MCF 10A (cell line): ENCODE measurements at regions of chr20 and their contacts with region 1.

Region 1: GRCh38 chr20:59042796-59043660 is 442 bp upstream of the PRELID3B start:
- DNase-seq: peak; percentile 93
- H3K4me3 Mint-ChIP-seq: peak overlapping the region; percentile 86
- H3K27ac Mint-ChIP-seq: peak overlapping the region; percentile 90
- H3K4me1 Mint-ChIP-seq: peaks cover 39% of the 10 kb centered on the region
- H3K27me3 Mint-ChIP-seq: no peaks in the 10 kb centered on the region
- CTCF ChIP-seq: no peak

Region 2: GRCh38 chr20:59010995-59011873 is 31.8 kb before region 1 on chr20:
- CTCF ChIA-PET with region 1: no interaction called
- POLR2A ChIA-PET with region 1: interaction called, 10 read pairs
- intact Hi-C with region 1: no loop called
- DNase-seq: peak; percentile 59
- H3K4me3 Mint-ChIP-seq: no peak overlapping the region
- H3K27ac Mint-ChIP-seq: peak overlapping the region; percentile 58
- H3K4me1 Mint-ChIP-seq: peaks cover 24% of the 10 kb centered on the region
- H3K27me3 Mint-ChIP-seq: no peaks in the 10 kb centered on the region
- CTCF ChIP-seq: no peak

Region 3: DNA sequence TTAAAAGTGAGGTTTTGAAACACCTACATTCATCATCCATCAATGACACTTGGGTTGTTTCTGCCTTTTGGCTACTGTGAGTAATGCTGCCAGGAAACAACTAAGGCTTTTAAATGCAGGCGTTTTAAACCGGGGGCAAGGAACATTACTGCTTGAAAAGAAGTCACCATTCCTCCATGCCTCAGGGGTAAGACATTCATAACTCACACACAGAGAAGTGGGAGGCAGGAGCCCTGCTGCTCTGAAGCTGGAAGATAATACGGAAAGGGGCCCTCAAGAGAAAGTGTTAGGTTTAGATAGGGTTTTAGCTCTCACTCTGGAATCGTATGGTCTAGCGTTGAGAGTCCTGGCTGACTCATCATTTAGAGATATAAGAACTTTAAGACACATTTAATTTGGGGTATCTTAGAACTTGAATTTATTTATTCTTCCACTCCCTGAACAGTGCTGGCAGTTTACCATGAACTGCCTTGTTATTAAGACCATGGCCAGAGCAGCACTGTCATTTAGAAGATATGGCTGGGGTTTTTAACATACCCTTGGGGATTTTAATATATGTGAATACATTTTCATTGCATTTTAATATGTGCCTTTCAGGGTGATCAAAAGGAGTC is 22.0 kb before region 1 on chr20:
- CTCF ChIA-PET with region 1: interaction called, 3 read pairs
- POLR2A ChIA-PET with region 1: interaction called, 12 read pairs
- intact Hi-C with region 1: no loop called
- DNase-seq: peak; percentile 82
- H3K4me3 Mint-ChIP-seq: peak overlapping the region; percentile 40
- H3K27ac Mint-ChIP-seq: peak overlapping the region; percentile 83
- H3K4me1 Mint-ChIP-seq: peaks cover 22% of the 10 kb centered on the region
- H3K27me3 Mint-ChIP-seq: no peaks in the 10 kb centered on the region
- CTCF ChIP-seq: no peak

Region 4: DNA sequence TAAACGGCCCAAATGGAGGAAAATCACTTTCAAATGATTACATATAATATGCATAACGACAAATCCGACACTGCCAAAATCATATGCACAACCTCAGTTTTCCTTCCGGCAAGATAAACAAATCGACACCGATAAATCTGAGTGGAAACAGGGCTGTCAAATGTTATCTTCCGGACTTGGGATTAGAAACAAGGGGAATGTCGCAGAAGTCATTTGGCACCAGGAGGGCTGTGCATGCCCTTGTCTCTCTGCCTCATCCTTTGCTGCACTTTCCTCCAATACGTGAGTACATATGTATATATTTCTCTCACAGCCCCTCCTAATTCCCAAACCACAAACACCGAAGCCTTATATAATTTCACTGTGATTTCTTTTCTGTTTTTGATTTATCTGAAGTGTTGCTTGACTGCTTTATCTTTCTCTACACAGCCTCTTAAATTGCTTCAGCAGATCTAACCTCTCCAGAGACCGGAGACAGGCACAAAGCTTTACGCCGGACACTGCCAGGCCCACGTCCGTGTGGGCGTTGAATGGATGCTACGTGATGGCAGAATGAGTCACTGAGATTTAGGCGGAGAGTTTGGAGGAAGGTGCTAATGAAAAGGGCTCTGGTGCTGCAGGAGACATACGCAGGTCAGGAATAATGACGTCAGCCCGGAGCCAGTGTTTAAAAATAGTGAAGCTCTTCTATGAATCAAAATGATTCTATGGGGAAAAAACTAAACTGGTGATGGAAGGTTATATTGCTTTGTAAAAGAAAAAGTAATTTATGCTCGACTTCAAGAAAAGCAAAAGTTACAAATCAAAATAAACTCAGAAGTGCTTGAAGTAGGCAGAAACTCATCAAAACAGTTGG is 20.6 kb after region 1 on chr20:
- CTCF ChIA-PET with region 1: no interaction called
- POLR2A ChIA-PET with region 1: interaction called, 10 read pairs
- intact Hi-C with region 1: no loop called
- DNase-seq: peak; percentile 85
- H3K4me3 Mint-ChIP-seq: peak overlapping the region; percentile 2
- H3K27ac Mint-ChIP-seq: peak overlapping the region; percentile 69
- H3K4me1 Mint-ChIP-seq: peaks cover 10% of the 10 kb centered on the region
- H3K27me3 Mint-ChIP-seq: no peaks in the 10 kb centered on the region
- CTCF ChIP-seq: no peak